ENCODE measurements at regions of chr10 and their contacts with region 1.

Region 1: GRCh38 chr10:71696628-71697326 is 22.8 kb downstream of the C10orf105 start:
- DNase-seq: peak; percentile 28 to 76
- ATAC-seq: peak; percentile 72 to 94; a peak in 5 of 6 replicates
- H3K4me3 ChIP-seq: no peak overlapping the region
- H3K27ac ChIP-seq: 0 out of 6 replicates have a peak overlapping the region, but pooled peaks of 1 of the 2 experiments have one; percentile 33
- H3K4me1 ChIP-seq: peaks cover 12% of the 10 kb centered on the region
- CTCF ChIP-seq: peak; percentile 83
- EP300 ChIP-seq: no peak
- POLR2A ChIP-seq: no peak
- RAD21 ChIP-seq: peak; percentile 60 to 62

Region 2: GRCh38 chr10:71383972-71384687 is 312.6 kb before region 1 on chr10:
- CTCF ChIA-PET with region 1: interaction called, 47 read pairs
- POLR2A ChIA-PET with region 1: no interaction called
- DNase-seq: peak; percentile 58 to 78
- ATAC-seq: peak; percentile 91 to 98
- H3K4me3 ChIP-seq: no peak overlapping the region
- H3K27ac ChIP-seq: no peak overlapping the region
- H3K4me1 ChIP-seq: no peaks in the 10 kb centered on the region
- CTCF ChIP-seq: peak; percentile 86
- EP300 ChIP-seq: no peak
- POLR2A ChIP-seq: no peak
- RAD21 ChIP-seq: peak; percentile 85 to 89

Region 3: DNA sequence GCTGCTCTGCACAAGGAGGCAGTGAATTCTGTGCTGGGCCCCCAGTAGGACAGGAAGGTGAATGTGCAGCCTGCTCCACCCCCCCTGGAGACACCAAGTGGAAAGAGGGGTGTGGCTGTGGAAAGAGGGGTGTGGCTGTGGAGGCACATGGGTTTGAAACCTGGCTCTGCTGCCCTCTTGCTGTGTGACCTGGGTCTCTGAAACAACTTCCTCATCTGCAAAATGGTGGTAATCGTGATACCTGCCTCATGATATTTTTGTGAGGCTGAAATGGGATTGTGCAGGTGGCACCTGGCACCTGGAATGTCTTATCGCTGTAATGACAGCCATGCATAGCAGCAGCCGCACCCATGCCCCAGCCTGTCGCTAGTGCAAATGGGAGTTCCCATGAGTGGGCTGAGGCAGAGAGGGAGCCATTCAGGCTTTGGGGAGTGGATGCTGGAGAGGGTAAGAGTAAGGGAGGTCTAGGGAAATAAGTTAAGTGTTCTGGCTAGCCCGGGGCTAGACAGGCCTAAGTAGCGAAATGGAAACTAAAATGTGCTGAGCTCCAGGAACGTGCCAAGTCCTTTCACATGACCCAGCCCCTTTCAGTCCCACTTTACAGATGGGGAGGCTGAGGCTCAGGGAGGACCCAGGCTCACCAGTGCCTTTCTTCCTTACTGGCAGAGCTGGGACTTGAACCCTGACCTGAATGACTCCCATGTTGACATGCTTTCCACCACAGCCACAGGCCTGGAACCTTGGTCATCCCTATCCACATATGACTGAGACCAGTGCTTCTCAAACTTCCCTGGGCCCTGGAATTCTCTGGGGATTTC is 12.2 kb before region 1 on chr10:
- CTCF ChIA-PET with region 1: interaction called, 71 read pairs
- POLR2A ChIA-PET with region 1: no interaction called
- DNase-seq: peak in 1 of 2 experiments; percentile 34
- ATAC-seq: peak; percentile 44 to 72; a peak in 4 of 6 replicates
- H3K4me3 ChIP-seq: no peak overlapping the region
- H3K27ac ChIP-seq: no peak overlapping the region
- H3K4me1 ChIP-seq: no peaks in the 10 kb centered on the region
- CTCF ChIP-seq: no peak
- EP300 ChIP-seq: no peak
- POLR2A ChIP-seq: no peak
- RAD21 ChIP-seq: no peak

Region 4: DNA sequence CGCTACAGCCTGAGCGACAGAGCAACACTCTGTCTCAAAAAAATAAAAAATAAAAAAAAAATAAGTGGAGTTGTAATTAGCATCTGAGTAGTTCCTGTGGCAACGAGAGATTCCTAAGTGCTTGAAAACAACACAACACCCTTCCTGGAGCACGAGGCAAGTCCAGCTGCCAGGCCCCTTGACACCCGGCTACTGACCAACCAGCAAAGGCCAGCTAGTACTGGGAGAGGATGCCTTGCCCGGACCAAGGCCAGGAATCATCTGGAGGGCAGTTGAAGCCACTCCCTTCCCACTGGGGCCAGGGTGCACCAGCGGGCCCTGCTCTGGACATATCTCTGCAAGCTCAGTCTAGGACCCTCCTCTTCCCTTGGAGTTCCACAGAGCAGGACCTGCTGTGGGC is 22.3 kb after region 1 on chr10:
- CTCF ChIA-PET with region 1: interaction called, 10 read pairs
- POLR2A ChIA-PET with region 1: no interaction called
- DNase-seq: no peak
- ATAC-seq: no peak
- H3K4me3 ChIP-seq: no peak overlapping the region
- H3K27ac ChIP-seq: no peak overlapping the region
- H3K4me1 ChIP-seq: peaks cover 3% of the 10 kb centered on the region
- CTCF ChIP-seq: no peak
- EP300 ChIP-seq: no peak
- POLR2A ChIP-seq: no peak
- RAD21 ChIP-seq: no peak

Region 5: GRCh38 chr10:71805776-71806703 is 109.3 kb after region 1 on chr10:
- CTCF ChIA-PET with region 1: interaction called, 20 read pairs
- POLR2A ChIA-PET with region 1: no interaction called
- DNase-seq: peak in 1 of 2 experiments; percentile 22
- ATAC-seq: peak; percentile 5 to 27; a peak in 5 of 6 replicates
- H3K4me3 ChIP-seq: no peak overlapping the region
- H3K27ac ChIP-seq: no peak overlapping the region
- H3K4me1 ChIP-seq: no peaks in the 10 kb centered on the region
- CTCF ChIP-seq: no peak
- EP300 ChIP-seq: no peak
- POLR2A ChIP-seq: no peak
- RAD21 ChIP-seq: no peak

Measured in A549 (cell line).